MCF 10A (cell line): ENCODE measurements at regions of chr10 and their contacts with region 1.

Region 1: GRCh38 chr10:111475720-111476119 is 398.9 kb downstream of the ADRA2A start:
- DNase-seq: peak; percentile 67
- H3K4me3 Mint-ChIP-seq: no peak overlapping the region
- H3K27ac Mint-ChIP-seq: no peak overlapping the region
- H3K4me1 Mint-ChIP-seq: peaks cover 35% of the 10 kb centered on the region
- H3K27me3 Mint-ChIP-seq: no peaks in the 10 kb centered on the region
- CTCF ChIP-seq: no peak

Region 2: DNA sequence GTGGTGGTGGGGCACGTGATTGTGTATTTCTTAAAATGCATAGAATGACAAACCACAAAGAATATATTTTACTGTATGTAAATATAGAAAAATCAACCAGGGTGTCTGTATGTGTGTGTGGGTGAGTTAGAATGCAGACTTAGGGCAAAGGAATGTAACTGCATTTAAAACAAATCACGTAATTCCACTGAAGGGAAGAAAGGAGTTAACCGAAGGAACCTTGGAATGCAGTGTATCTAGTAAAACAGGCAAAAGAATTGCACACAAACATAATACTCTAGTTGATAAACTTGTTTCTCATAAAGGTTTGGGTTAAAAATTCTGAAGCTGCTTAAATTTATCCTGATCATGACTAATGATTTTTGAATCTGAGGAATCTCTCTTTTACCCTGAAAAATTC is 264.0 kb before region 1 on chr10:
- CTCF ChIA-PET with region 1: no interaction called
- POLR2A ChIA-PET with region 1: no interaction called
- intact Hi-C with region 1: no loop called
- DNase-seq: no peak
- H3K4me3 Mint-ChIP-seq: no peak overlapping the region
- H3K27ac Mint-ChIP-seq: no peak overlapping the region
- H3K4me1 Mint-ChIP-seq: no peaks in the 10 kb centered on the region
- H3K27me3 Mint-ChIP-seq: peaks cover 9% of the 10 kb centered on the region
- CTCF ChIP-seq: no peak

Region 3: GRCh38 chr10:111265341-111265740 is 210.4 kb before region 1 on chr10:
- CTCF ChIA-PET with region 1: no interaction called
- POLR2A ChIA-PET with region 1: no interaction called
- intact Hi-C with region 1: no loop called
- DNase-seq: no peak
- H3K4me3 Mint-ChIP-seq: no peak overlapping the region
- H3K27ac Mint-ChIP-seq: no peak overlapping the region
- H3K4me1 Mint-ChIP-seq: no peaks in the 10 kb centered on the region
- H3K27me3 Mint-ChIP-seq: peaks cover 72% of the 10 kb centered on the region
- CTCF ChIP-seq: no peak

Region 4: GRCh38 chr10:111440501-111440900 is 35.2 kb before region 1 on chr10:
- CTCF ChIA-PET with region 1: no interaction called
- POLR2A ChIA-PET with region 1: interaction called, 21 read pairs
- intact Hi-C with region 1: no loop called
- DNase-seq: no peak
- H3K4me3 Mint-ChIP-seq: no peak overlapping the region
- H3K27ac Mint-ChIP-seq: no peak overlapping the region
- H3K4me1 Mint-ChIP-seq: peaks cover 6% of the 10 kb centered on the region
- H3K27me3 Mint-ChIP-seq: no peaks in the 10 kb centered on the region
- CTCF ChIP-seq: no peak

Region 5: DNA sequence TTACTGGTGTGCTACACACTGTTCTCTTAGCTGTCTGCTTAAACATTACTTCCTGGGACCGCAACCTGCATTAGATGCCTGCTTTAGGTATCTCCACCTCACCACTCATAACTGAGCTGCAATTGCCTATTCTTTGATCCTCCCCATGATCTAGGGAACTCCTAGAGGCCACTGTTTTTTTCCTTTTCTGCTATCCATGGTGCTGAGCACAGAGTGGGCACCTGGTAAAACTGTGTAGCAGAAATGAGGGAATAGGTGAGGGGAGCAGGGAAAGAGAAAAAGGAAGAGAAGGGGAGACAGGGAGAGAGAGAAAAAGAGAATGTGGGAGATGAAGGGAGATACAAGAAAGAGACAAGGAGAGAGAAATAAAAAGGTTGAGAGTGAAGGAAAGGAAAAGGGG is 36.0 kb after region 1 on chr10:
- CTCF ChIA-PET with region 1: no interaction called
- POLR2A ChIA-PET with region 1: no interaction called
- intact Hi-C with region 1: no loop called
- DNase-seq: peak; percentile 24
- H3K4me3 Mint-ChIP-seq: no peak overlapping the region
- H3K27ac Mint-ChIP-seq: no peak overlapping the region
- H3K4me1 Mint-ChIP-seq: no peaks in the 10 kb centered on the region
- H3K27me3 Mint-ChIP-seq: no peaks in the 10 kb centered on the region
- CTCF ChIP-seq: no peak